ENCODE measurements at regions of chr11 and their contacts with region 1.

Region 1: DNA sequence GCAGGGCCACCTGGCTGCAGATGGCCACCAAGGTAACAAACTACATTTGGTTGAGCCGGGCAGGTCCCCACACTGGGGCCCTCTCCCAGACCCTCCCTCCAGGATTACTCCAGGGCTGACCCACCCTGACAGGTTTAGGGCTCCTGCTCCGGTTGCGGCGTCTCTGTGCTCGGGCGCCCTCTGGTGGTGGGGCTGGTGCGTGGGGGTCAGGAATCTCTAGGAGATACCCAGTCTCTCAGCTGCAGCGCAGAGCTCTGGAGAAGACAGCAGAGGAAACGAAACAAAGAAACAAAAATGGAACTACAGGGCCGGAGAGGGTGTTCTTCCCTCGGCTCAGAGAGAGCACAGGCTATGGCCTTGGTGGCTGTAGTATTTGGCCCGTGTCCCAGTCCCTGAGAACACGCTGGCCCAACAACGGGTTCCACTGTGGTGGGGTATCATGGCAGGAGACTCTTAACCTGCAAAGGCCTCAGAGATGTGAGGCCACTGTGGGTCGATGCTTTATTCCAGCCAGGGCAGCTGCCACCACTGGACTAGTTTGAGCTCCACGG is 2.4 kb downstream of the C11orf96 start:
- DNase-seq: peak; percentile 91

Region 2: DNA sequence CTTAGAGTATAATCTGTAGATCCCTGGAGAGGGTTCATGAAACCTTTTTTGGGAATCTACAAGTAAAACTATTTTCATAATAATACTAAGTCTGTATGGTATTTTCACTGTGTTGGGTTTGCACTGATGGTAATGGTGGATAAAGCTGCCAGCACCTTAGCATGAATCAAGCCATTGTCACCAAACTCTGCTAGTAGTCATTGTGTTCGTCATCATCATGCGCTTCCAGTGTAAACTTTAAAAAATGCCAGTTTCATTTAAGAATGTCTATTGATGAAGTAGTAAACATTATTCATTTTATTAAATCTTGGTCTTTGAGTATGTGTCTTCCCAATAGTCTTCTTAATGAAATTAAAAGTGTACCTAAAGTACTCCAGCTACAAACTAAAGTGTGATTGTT is 49.2 kb before region 1 on chr11:
- intact Hi-C with region 1: loop called (anchors 2 kb)
- DNase-seq: no peak

Region 3: DNA sequence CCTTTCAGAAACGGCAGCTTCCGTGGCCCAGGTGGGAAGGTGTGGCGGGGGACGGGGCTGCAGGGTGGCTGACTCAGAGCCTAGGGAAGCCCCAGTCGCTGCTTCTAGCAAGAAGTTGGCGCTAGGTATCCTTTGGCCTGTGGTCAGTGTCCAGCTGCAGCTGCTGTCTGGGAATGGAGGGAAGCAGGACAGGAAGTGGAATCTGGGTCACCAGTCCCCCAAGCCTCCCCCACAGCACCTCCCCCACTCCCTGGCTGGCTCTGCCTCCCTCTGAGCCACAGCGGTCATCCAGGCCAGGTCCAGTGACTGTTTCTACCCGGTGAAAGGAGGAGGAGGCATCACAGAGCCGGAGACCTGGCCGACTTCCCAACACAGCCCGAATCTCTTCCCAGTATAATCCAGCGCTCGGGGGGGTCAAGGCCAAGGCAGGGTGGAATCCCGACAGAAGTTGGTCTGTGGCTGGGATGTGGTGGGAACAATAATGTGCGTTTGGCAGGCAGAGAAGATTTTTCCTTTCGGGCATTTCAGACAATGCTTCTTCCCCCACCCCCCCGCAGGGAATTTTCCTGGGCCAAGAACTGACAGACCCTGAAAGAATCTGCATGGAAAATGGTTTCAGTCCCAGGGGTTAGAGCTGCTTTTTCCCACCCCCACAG is 42.7 kb after region 1 on chr11:
- intact Hi-C with region 1: loop called (anchors 1 kb)
- DNase-seq: peak; percentile 94

Region 4: GRCh38 chr11:44036811-44037657 is 92.2 kb after region 1 on chr11:
- intact Hi-C with region 1: loop called (anchors 2 kb)
- DNase-seq: peak; percentile 87